Activated CD4-positive, alpha-beta T cell treated with anti-CD3 and anti-CD28 coated beads for 36 hours (primary cell): ENCODE measurements at regions of chr1 and their contacts with region 1.

Region 1: GRCh38 chr1:39268112-39268581 is 63.7 kb downstream of the MACF1 start:
- DNase-seq: peak; percentile 43
- ATAC-seq: peak; percentile 69
- H3K4me3 Mint-ChIP-seq: peak overlapping the region; percentile 57
- H3K27ac Mint-ChIP-seq: peak overlapping the region; percentile 88
- H3K4me1 Mint-ChIP-seq: peaks cover 79% of the 10 kb centered on the region
- H3K27me3 Mint-ChIP-seq: no peaks in the 10 kb centered on the region

Region 2: DNA sequence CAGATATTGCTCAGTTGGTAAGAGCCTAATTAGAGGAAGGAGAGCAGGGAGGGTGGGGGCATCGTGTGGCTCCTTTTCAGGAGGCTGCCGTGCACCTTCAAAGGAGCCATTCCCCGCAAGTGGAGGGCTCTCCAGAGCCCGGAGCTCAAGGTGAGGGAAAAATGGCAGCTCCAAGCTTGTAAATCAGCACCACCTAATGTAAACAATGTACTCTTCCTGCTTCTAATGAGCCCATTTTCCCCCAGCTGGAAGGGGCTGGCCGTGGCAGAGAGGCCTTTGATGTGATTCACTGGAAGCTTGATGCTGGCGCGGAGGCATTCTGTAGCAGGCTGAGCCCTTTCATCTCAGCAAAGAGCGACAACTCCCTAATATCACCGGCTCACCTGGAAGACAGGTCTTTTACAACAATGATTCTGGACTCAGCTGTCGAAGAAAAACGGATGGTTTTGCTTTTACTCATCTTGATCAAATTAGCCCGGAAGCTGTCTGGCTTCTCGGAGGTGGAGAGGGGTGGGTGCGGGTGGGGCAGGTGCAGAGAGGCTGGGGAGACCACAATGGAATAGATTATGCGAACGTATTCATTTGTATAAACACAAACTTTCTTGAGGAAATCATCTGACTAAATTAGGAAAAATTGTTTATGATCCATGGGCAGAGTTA is 521.1 kb before region 1 on chr1:
- CTCF ChIA-PET with region 1: no interaction called
- POLR2A ChIA-PET with region 1: no interaction called
- intact Hi-C with region 1: no loop called
- DNase-seq: no peak
- ATAC-seq: no peak
- H3K4me3 Mint-ChIP-seq: no peak overlapping the region
- H3K27ac Mint-ChIP-seq: no peak overlapping the region
- H3K4me1 Mint-ChIP-seq: peaks cover 9% of the 10 kb centered on the region
- H3K27me3 Mint-ChIP-seq: peaks cover 13% of the 10 kb centered on the region

Region 3: DNA sequence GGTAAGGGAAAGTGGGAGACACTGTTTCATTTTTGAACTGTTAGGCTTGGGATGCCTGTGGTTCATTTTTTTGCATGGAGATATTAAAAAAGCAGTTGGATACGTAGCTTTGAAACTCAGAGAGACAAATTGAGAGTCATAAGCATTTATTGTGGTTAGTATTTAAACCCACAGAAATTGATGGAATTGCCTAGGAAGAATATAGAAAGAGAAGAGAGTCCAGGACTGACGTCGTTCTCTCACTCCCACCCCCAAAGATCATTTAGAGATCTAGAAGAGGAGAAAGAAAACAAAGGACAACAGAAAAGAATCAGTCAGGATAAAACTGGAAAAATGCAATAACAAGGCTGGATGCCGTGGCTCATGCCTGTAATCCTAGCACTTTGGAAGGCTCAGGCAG is 150.1 kb after region 1 on chr1:
- CTCF ChIA-PET with region 1: no interaction called
- POLR2A ChIA-PET with region 1: interaction called, 10 read pairs
- intact Hi-C with region 1: no loop called
- DNase-seq: no peak
- ATAC-seq: no peak
- H3K4me3 Mint-ChIP-seq: no peak overlapping the region
- H3K27ac Mint-ChIP-seq: no peak overlapping the region
- H3K4me1 Mint-ChIP-seq: peaks cover 27% of the 10 kb centered on the region
- H3K27me3 Mint-ChIP-seq: no peaks in the 10 kb centered on the region

Region 4: GRCh38 chr1:39485046-39485803 is 217.1 kb after region 1 on chr1:
- CTCF ChIA-PET with region 1: no interaction called
- POLR2A ChIA-PET with region 1: no interaction called
- intact Hi-C with region 1: no loop called
- DNase-seq: no peak
- ATAC-seq: no peak
- H3K4me3 Mint-ChIP-seq: no peak overlapping the region
- H3K27ac Mint-ChIP-seq: no peak overlapping the region
- H3K4me1 Mint-ChIP-seq: no peaks in the 10 kb centered on the region
- H3K27me3 Mint-ChIP-seq: no peaks in the 10 kb centered on the region

Region 5: DNA sequence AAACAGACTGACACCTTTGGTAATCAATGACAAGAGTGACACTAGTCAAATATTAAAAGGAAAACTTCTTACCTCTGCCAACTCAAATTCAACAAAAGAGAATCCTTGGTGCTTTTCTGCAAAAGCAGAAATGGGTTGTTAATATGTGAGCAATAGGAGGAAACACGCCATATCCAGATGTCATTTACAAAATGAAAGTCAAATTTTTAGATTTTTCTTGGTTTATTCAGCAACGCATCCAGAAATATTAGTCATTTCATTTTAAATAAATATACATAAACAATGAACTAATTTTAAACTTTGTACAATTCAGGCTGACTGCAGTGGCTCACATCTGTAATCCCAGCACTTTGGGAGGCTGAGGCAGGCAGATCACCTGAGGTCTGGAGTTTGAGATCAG is 286.1 kb after region 1 on chr1:
- CTCF ChIA-PET with region 1: no interaction called
- POLR2A ChIA-PET with region 1: no interaction called
- intact Hi-C with region 1: no loop called
- DNase-seq: no peak
- ATAC-seq: no peak
- H3K4me3 Mint-ChIP-seq: no peak overlapping the region
- H3K27ac Mint-ChIP-seq: no peak overlapping the region
- H3K4me1 Mint-ChIP-seq: peaks cover 7% of the 10 kb centered on the region
- H3K27me3 Mint-ChIP-seq: no peaks in the 10 kb centered on the region